ENCODE measurements at regions of chr22 and their contacts with region 1.

Region 1: GRCh38 chr22:23913661-23914353 is 19.6 kb downstream of the MIF start:
- DNase-seq: peak; percentile 97 to 99 (median 99)
- ATAC-seq: peak; percentile 99
- H3K4me3 ChIP-seq: peak overlapping the region; percentile 67 to 69
- H3K4me3 Mint-ChIP-seq: peak overlapping the region; percentile 89
- H3K27ac ChIP-seq: peak overlapping the region; percentile 62 to 80
- H3K27ac Mint-ChIP-seq: peak overlapping the region; percentile 96
- H3K4me1 ChIP-seq: no peaks in the 10 kb centered on the region
- H3K4me1 Mint-ChIP-seq: peaks cover 20% of the 10 kb centered on the region
- H3K27me3 ChIP-seq: no peaks in the 10 kb centered on the region
- H3K27me3 Mint-ChIP-seq: no peaks in the 10 kb centered on the region
- CTCF ChIP-seq: no peak

Region 2: DNA sequence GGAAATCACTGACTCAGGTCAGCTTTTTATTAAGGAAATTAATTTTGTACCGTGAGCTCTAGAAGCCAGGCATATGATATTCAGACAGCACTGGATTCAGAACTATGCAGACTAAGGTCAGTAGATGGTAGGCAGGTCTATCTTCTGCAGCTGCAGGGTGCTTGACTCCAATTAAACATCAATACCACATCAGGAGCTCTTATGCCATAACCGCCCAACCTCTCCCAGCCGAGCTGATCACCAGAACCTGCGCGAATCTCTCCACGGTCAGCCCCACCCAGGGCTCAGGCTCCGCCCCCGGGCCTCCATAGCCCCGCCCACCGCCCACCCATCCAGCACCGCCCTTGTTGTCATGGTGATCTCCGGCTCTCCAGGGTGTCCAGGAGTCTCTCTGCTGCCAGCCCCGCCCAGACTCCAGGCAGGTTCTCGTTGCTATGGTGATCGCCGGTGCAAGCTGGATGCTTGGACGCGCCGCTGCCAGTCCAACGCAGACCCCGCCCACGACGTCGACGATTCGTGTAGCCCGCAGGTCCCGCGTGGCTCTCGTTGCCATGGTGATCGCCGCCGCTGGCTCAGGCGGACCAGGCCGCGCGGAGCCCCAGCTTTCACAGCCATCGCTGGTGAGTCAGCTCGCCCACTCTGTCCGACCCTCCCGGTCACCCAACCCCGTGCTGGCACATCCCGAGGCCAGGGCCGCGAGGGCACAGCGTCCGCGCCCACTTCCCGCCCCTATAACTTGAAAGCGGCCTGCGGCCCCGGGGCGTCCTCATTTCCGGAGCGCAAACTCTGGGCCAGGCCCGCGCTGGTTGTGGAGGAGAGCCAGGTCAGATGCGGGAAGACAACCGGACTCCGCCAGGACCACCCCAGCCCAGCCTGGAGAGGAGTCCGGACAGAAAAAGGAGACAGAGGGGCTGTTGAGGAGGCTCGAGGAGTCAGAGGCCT is 768.6 kb before region 1 on chr22 and contains the start of gene RAB36:
- CTCF ChIA-PET with region 1: no interaction called
- POLR2A ChIA-PET with region 1: no interaction called
- intact Hi-C with region 1: loop called in 1 of 2 experiments (anchors 5 kb)
- DNase-seq: peak; percentile 73 to 97 (median 89)
- ATAC-seq: peak; percentile 50
- H3K4me3 ChIP-seq: peak within 1 kb of the TSS; percentile 35 to 40
- H3K4me3 Mint-ChIP-seq: peak within 1 kb of the TSS; percentile 78
- H3K27ac ChIP-seq: peak within 1 kb of the TSS; percentile 71 to 87
- H3K27ac Mint-ChIP-seq: peak within 1 kb of the TSS; percentile 86
- H3K4me1 ChIP-seq: peaks cover 55% of the 10 kb centered on the region
- H3K4me1 Mint-ChIP-seq: peaks cover 46% of the 10 kb centered on the region
- H3K27me3 ChIP-seq: no peaks in the 10 kb centered on the region
- H3K27me3 Mint-ChIP-seq: no peaks in the 10 kb centered on the region
- CTCF ChIP-seq: no peak
- total RNA-seq, gene RAB36: 0.52 to 0.64 TPM

Region 3: GRCh38 chr22:23857606-23858483 is 56.0 kb before region 1 on chr22 and contains the start of gene SLC2A11:
- CTCF ChIA-PET with region 1: no interaction called
- POLR2A ChIA-PET with region 1: interaction called, 4 read pairs
- intact Hi-C with region 1: loop called in 1 of 2 experiments (anchors 5 kb)
- DNase-seq: peak; percentile 83 to 98 (median 93)
- ATAC-seq: peak; percentile 95
- H3K4me3 ChIP-seq: peak within 1 kb of the TSS; percentile 65 to 96
- H3K4me3 Mint-ChIP-seq: peak within 1 kb of the TSS; percentile 98
- H3K27ac ChIP-seq: peak within 1 kb of the TSS; percentile 50 to 67
- H3K27ac Mint-ChIP-seq: peak within 1 kb of the TSS; percentile 85
- H3K4me1 ChIP-seq: peaks cover 11% of the 10 kb centered on the region
- H3K4me1 Mint-ChIP-seq: peaks cover 21% of the 10 kb centered on the region
- H3K27me3 ChIP-seq: no peaks in the 10 kb centered on the region
- H3K27me3 Mint-ChIP-seq: no peaks in the 10 kb centered on the region
- CTCF ChIP-seq: peak; percentile 23
- total RNA-seq, gene SLC2A11: 12.7 to 14.3 TPM

Region 4: DNA sequence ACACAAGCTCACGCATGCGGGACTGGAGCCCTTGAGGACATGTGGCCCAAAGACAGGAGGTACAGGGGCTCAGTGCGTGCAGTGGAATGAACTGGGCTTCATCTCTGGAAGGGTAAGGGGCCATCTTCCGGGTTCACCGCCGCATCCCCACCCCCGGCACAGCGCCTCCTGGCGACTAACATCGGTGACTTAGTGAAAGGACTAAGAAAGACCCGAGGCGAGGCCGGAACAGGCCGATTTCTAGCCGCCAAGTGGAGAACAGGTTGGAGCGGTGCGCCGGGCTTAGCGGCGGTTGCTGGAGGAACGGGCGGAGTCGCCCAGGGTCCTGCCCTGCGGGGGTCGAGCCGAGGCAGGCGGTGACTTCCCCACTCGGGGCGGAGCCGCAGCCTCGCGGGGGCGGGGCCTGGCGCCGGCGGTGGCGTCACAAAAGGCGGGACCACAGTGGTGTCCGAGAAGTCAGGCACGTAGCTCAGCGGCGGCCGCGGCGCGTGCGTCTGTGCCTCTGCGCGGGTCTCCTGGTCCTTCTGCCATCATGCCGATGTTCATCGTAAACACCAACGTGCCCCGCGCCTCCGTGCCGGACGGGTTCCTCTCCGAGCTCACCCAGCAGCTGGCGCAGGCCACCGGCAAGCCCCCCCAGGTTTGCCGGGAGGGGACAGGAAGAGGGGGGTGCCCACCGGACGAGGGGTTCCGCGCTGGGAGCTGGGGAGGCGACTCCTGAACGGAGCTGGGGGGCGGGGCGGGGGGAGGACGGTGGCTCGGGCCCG is 19.7 kb before region 1 on chr22 and contains the start of gene MIF:
- CTCF ChIA-PET with region 1: interaction called, 8 read pairs
- POLR2A ChIA-PET with region 1: interaction called, 63 read pairs
- intact Hi-C with region 1: loop called (anchors 1 kb)
- DNase-seq: peak; percentile 88 to 98 (median 94)
- ATAC-seq: peak; percentile 82
- H3K4me3 ChIP-seq: peak within 1 kb of the TSS; percentile 66 to 79
- H3K4me3 Mint-ChIP-seq: peak within 1 kb of the TSS; percentile 93
- H3K27ac ChIP-seq: peak within 1 kb of the TSS; percentile 75 to 92
- H3K27ac Mint-ChIP-seq: peak within 1 kb of the TSS; percentile 95
- H3K4me1 ChIP-seq: peaks cover 16% of the 10 kb centered on the region
- H3K4me1 Mint-ChIP-seq: peaks cover 23% of the 10 kb centered on the region
- H3K27me3 ChIP-seq: no peaks in the 10 kb centered on the region
- H3K27me3 Mint-ChIP-seq: no peaks in the 10 kb centered on the region
- CTCF ChIP-seq: peak; percentile 76
- total RNA-seq, gene MIF: 181 to 191 TPM

Region 5: DNA sequence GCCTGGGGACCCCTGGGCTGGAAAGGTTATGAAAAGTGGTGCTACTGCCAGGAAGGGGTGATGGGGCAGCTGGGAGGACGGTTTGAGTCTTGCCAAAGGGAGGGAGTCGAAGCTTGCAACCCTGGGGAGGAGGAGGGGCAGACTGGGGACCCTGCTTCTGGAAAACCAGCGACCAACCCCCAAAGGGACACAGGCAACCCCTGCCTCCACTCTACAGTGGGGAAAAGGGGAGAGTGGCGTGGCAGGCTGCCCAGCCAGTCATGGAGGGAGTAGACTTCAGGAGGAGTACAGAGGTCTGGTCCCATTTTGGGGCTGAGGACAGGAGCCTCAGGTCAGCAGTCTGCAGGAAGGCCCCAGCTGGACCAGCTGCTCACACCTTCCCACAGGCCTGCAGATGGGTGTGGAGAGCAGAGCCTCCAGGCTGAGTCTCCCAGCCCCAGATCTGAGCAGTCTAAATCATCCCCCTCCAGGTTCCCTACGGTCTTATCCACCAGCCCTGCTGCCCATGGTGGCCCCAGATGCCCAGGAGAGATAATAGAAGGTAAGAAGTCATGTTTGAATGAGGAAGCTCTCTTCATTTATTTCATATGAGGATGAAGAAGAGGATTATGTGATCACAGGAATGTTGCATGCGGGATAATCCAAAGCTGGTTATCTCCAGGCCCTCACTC is 57.1 kb after region 1 on chr22:
- CTCF ChIA-PET with region 1: no interaction called
- POLR2A ChIA-PET with region 1: no interaction called
- intact Hi-C with region 1: loop called in 1 of 2 experiments (anchors 5 kb)
- DNase-seq: no peak
- ATAC-seq: no peak
- H3K4me3 ChIP-seq: no peak overlapping the region
- H3K4me3 Mint-ChIP-seq: peak overlapping the region; percentile 29
- H3K27ac ChIP-seq: no peak overlapping the region
- H3K27ac Mint-ChIP-seq: no peak overlapping the region
- H3K4me1 ChIP-seq: no peaks in the 10 kb centered on the region
- H3K4me1 Mint-ChIP-seq: peaks cover 21% of the 10 kb centered on the region
- H3K27me3 ChIP-seq: no peaks in the 10 kb centered on the region
- H3K27me3 Mint-ChIP-seq: no peaks in the 10 kb centered on the region
- CTCF ChIP-seq: no peak